CD8-positive, alpha-beta T cell (primary cell): ENCODE measurements at regions of chr1 and their contacts with region 1.

Region 1: GRCh38 chr1:160675641-160676410 is 29.0 kb upstream of the SLAMF1 start:
- DNase-seq: peak; percentile 49 to 85 (median 80)
- ATAC-seq: peak; percentile 79
- H3K4me3 ChIP-seq: no peak overlapping the region
- H3K4me3 Mint-ChIP-seq: no peak overlapping the region
- H3K27ac ChIP-seq: peak overlapping the region in 1 of 2 experiments; percentile 47
- H3K27ac Mint-ChIP-seq: peak overlapping the region; percentile 84
- H3K4me1 ChIP-seq: peaks cover 45% of the 10 kb centered on the region
- H3K4me1 Mint-ChIP-seq: peaks cover 16% of the 10 kb centered on the region
- H3K27me3 ChIP-seq: no peaks in the 10 kb centered on the region
- H3K27me3 Mint-ChIP-seq: no peaks in the 10 kb centered on the region
- CTCF ChIP-seq: peak; percentile 76

Region 2: GRCh38 chr1:160428655-160429054 is 247.2 kb before region 1 on chr1:
- CTCF ChIA-PET with region 1: interaction called, 3 read pairs
- POLR2A ChIA-PET with region 1: no interaction called
- intact Hi-C with region 1: loop called in 1 of 2 experiments (anchors 2 kb)
- DNase-seq: peak in 6 of 9 experiments; percentile 24 to 73 (median 54)
- ATAC-seq: peak; percentile 54
- H3K4me3 ChIP-seq: peak overlapping the region in 1 of 2 experiments; percentile 20
- H3K4me3 Mint-ChIP-seq: peak overlapping the region; percentile 55
- H3K27ac ChIP-seq: peak overlapping the region; percentile 50 to 86
- H3K27ac Mint-ChIP-seq: peak overlapping the region; percentile 86
- H3K4me1 ChIP-seq: peaks cover 63% of the 10 kb centered on the region
- H3K4me1 Mint-ChIP-seq: peaks cover 62% of the 10 kb centered on the region
- H3K27me3 ChIP-seq: no peaks in the 10 kb centered on the region
- H3K27me3 Mint-ChIP-seq: no peaks in the 10 kb centered on the region
- CTCF ChIP-seq: peak; percentile 41

Region 3: DNA sequence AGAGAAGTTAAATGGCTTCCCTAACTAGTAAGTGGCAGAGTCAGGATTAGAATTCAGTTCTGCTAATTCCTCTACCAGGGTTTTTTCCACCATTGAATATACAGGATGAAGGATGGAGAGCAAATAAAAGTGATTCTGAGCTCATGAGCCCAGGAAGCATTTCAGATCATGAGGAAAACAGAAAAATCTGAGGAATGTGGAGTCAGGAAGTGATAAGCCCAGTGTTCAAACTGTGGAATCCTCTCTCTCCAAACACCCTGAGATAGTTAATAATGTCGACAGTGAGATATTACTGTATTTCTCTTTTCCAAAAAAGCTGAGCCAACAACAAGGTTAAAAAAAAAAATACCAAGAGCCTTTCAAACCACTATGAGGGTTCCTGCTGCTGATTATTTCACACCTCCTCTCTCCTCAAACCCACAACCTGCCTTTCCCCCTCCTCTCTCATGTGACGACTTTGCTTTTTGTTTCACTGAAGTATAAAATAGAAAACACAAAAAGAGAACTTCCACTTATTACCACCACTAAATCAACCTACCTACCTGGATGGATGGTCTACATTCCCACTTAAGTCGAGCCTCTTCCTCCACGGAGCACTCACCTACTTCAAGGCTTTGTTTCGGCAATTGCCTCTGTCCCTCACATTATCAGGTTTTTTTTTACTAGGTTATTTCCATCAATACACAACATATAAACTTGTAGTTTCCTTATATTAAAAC is 37.8 kb before region 1 on chr1:
- CTCF ChIA-PET with region 1: interaction called, 75 read pairs
- POLR2A ChIA-PET with region 1: interaction called, 4 read pairs
- intact Hi-C with region 1: no loop called
- DNase-seq: peak in 7 of 9 experiments; percentile 39 to 91 (median 62)
- ATAC-seq: peak; percentile 69
- H3K4me3 ChIP-seq: peak overlapping the region; percentile 9 to 18
- H3K4me3 Mint-ChIP-seq: peak overlapping the region; percentile 78
- H3K27ac ChIP-seq: peak overlapping the region; percentile 20 to 69
- H3K27ac Mint-ChIP-seq: peak overlapping the region; percentile 95
- H3K4me1 ChIP-seq: peaks cover 91% of the 10 kb centered on the region
- H3K4me1 Mint-ChIP-seq: peaks cover 96% of the 10 kb centered on the region
- H3K27me3 ChIP-seq: no peaks in the 10 kb centered on the region
- H3K27me3 Mint-ChIP-seq: no peaks in the 10 kb centered on the region
- CTCF ChIP-seq: no peak

Region 4: DNA sequence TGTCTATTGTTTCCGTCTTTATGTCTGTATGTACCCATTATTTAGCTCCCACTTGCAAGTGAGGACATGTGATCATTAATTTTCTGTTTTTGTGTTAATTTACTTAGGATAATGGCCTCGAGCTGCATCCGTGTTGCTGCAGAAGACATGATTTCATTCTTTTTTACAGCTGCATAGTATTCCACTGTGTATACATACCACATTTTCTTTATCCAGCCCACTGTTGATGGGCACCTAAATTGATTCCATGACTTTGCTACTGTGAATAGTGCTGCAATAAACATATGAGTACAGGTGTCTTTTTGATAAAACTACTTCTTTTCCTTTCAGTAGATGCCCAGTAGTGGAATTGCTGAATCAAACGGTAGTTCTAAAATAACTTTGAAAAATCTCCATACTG is 16.3 kb before region 1 on chr1:
- CTCF ChIA-PET with region 1: interaction called, 12 read pairs
- POLR2A ChIA-PET with region 1: interaction called, 5 read pairs
- intact Hi-C with region 1: loop called in 1 of 2 experiments (anchors 2 kb)
- DNase-seq: no peak
- ATAC-seq: no peak
- H3K4me3 ChIP-seq: no peak overlapping the region
- H3K4me3 Mint-ChIP-seq: no peak overlapping the region
- H3K27ac ChIP-seq: no peak overlapping the region
- H3K27ac Mint-ChIP-seq: no peak overlapping the region
- H3K4me1 ChIP-seq: peaks cover 31% of the 10 kb centered on the region
- H3K4me1 Mint-ChIP-seq: peaks cover 58% of the 10 kb centered on the region
- H3K27me3 ChIP-seq: no peaks in the 10 kb centered on the region
- H3K27me3 Mint-ChIP-seq: no peaks in the 10 kb centered on the region
- CTCF ChIP-seq: no peak

Region 5: GRCh38 chr1:160726498-160727315 is 50.9 kb after region 1 on chr1:
- CTCF ChIA-PET with region 1: interaction called, 95 read pairs
- POLR2A ChIA-PET with region 1: interaction called, 6 read pairs
- intact Hi-C with region 1: loop called (anchors 1 kb)
- DNase-seq: peak; percentile 29 to 89 (median 63)
- ATAC-seq: peak; percentile 86
- H3K4me3 ChIP-seq: no peak overlapping the region
- H3K4me3 Mint-ChIP-seq: no peak overlapping the region
- H3K27ac ChIP-seq: peak overlapping the region in 1 of 2 experiments; percentile 22
- H3K27ac Mint-ChIP-seq: no peak overlapping the region
- H3K4me1 ChIP-seq: peaks cover 21% of the 10 kb centered on the region
- H3K4me1 Mint-ChIP-seq: peaks cover 16% of the 10 kb centered on the region
- H3K27me3 ChIP-seq: no peaks in the 10 kb centered on the region
- H3K27me3 Mint-ChIP-seq: no peaks in the 10 kb centered on the region
- CTCF ChIP-seq: peak; percentile 99

Region 6: DNA sequence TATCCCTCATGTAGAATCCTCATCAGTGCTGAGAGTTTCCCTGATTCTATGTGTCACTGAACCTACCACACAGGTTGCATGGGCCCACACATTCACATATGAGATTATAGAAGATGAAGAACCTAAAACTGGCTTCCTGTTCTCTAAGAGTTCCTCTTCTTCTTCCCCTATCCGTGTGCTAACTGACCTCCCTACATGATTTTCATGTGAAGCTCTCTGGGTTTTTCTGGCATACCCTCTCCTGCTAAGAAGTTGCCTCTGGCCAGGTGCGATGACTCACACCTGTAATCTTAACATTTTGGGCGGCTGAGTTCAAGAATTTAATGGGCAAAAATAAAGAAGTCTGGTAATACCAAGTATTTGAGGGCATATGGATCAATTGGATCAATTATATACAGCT is 192.3 kb after region 1 on chr1:
- CTCF ChIA-PET with region 1: no interaction called
- POLR2A ChIA-PET with region 1: no interaction called
- intact Hi-C with region 1: no loop called
- DNase-seq: no peak
- ATAC-seq: no peak
- H3K4me3 ChIP-seq: no peak overlapping the region
- H3K4me3 Mint-ChIP-seq: no peak overlapping the region
- H3K27ac ChIP-seq: no peak overlapping the region
- H3K27ac Mint-ChIP-seq: no peak overlapping the region
- H3K4me1 ChIP-seq: no peaks in the 10 kb centered on the region
- H3K4me1 Mint-ChIP-seq: peaks cover 12% of the 10 kb centered on the region
- H3K27me3 ChIP-seq: no peaks in the 10 kb centered on the region
- H3K27me3 Mint-ChIP-seq: no peaks in the 10 kb centered on the region
- CTCF ChIP-seq: no peak

Region 7: GRCh38 chr1:160951443-160952128 is 275.8 kb after region 1 on chr1:
- CTCF ChIA-PET with region 1: interaction called, 23 read pairs
- POLR2A ChIA-PET with region 1: no interaction called
- intact Hi-C with region 1: loop called (anchors 1 kb)
- DNase-seq: peak; percentile 42 to 83 (median 73)
- ATAC-seq: peak; percentile 91
- H3K4me3 ChIP-seq: no peak overlapping the region
- H3K4me3 Mint-ChIP-seq: no peak overlapping the region
- H3K27ac ChIP-seq: no peak overlapping the region
- H3K27ac Mint-ChIP-seq: no peak overlapping the region
- H3K4me1 ChIP-seq: peaks cover 8% of the 10 kb centered on the region
- H3K4me1 Mint-ChIP-seq: peaks cover 12% of the 10 kb centered on the region
- H3K27me3 ChIP-seq: no peaks in the 10 kb centered on the region
- H3K27me3 Mint-ChIP-seq: no peaks in the 10 kb centered on the region
- CTCF ChIP-seq: peak; percentile 79